Sciatic nerve (tissue), 2 donors: ENCODE measurements at regions of chr19 and their contacts with region 1.

Region 1: DNA sequence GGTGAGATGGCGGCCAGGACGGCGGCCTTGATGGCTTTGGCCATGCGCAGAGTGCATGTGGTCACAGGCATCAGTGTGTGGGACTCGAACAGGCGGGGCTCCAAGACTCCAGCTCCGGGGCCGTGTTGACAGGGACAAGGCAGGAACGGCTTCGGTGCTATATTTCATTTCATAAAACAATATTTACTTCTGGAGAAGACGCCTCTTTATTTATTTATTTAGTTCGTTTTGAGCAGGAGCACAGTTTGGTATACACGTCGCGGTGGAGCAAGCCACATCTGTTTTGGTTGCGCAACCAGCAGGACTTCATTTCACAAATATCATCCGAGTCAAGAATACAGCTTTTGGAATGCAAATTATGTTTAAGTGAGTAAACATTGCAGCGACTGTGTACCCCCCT is 166.7 kb upstream of the TSHZ3 start:
- DNase-seq: no peak
- ATAC-seq: peak; percentile 44

Region 2: GRCh38 chr19:31600731-31601295 is 84.9 kb after region 1 on chr19:
- intact Hi-C with region 1: no loop called
- DNase-seq: no peak
- ATAC-seq: no peak

Region 3: DNA sequence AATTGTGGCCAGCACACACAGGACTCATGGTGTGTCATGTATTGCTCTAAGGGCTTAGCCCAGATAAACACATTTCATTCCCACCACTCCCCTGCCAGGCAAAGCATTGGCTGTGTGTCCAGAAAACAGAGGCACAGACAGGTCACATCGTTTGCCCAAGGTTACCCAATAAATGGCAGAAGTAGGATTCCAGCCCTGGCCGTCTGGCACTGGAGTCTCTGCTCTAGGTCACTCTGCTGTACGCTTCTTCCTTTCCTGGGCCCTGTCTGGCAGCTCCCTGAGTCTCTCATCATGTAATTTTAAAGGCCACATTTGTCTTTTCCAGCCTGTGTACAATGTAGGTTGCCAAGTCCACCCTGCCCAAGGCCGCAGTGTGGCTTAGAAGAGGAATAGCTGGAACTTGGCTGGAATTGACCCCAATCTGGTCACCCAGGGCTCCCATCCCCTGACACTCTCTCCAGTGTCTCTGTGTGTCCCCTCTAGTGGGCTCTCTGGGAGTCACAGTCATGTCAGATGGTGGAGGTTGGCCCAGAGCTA is 97.8 kb after region 1 on chr19:
- intact Hi-C with region 1: no loop called
- DNase-seq: no peak
- ATAC-seq: no peak

Region 4: GRCh38 chr19:33005420-33005819 is 1489.5 kb after region 1 on chr19:
- intact Hi-C with region 1: loop called (anchors 10 kb)
- DNase-seq: no peak
- ATAC-seq: no peak